HepG2 (cell line): ENCODE measurements at regions of chr17 and their contacts with region 1.

Region 1: DNA sequence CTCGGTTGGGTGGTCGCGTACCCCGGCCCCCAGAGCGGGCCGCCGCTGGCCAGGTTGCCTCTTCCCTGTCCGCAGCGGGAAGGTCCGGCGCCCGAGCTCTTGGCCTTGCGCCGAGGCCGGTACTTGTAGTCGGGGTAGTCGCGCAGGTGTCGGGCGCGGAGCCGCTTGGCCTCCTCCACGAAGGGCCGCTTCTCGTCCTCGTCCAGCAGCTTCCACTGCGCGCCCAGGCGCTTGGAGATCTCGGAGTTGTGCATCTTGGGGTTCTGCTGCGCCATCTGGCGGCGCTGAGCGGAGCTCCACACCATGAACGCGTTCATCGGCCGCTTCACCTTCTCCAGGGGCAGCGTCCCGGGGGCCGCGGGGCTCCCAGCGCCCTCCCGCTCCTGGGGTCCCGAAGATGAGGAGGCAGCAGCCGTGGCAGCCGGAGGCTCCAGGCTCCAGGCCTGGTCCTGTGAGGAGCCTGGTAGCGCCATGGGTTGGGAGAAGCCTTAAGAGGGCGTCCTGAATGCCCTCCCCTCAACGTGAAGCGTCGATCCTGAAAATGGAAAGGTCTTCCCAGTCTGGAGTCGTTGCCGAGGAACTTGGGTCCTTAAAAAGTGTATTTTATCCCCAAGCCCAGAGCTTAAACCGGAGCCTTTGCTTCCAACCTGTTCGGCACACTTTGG is 558 bp downstream of the SOX15 start:
- DNase-seq: no peak
- ATAC-seq: no peak
- H3K4me3 ChIP-seq: no peak overlapping the region
- H3K27ac ChIP-seq: no peak overlapping the region
- H3K4me1 ChIP-seq: peaks cover 13% of the 10 kb centered on the region
- H3K27me3 ChIP-seq: no peaks in the 10 kb centered on the region; a peak in 1 of 5 replicates
- CTCF ChIP-seq: no peak
- EP300 ChIP-seq: no peak
- POLR2A ChIP-seq: no peak
- RAD21 ChIP-seq: no peak

Region 2: GRCh38 chr17:7673239-7673638 is 83.9 kb after region 1 on chr17:
- CTCF ChIA-PET with region 1: interaction called, 7 read pairs
- POLR2A ChIA-PET with region 1: no interaction called
- in situ Hi-C with region 1: no loop called
- intact Hi-C with region 1: loop called (anchors 1 kb)
- DNase-seq: peak; percentile 27
- ATAC-seq: no peak
- H3K4me3 ChIP-seq: no peak overlapping the region
- H3K27ac ChIP-seq: no peak overlapping the region
- H3K4me1 ChIP-seq: no peaks in the 10 kb centered on the region
- H3K27me3 ChIP-seq: no peaks in the 10 kb centered on the region; a peak in 1 of 5 replicates
- CTCF ChIP-seq: peak; percentile 72
- EP300 ChIP-seq: no peak
- POLR2A ChIP-seq: no peak
- RAD21 ChIP-seq: no peak